ENCODE measurements at regions of chr6 and their contacts with region 1.

Region 1: DNA sequence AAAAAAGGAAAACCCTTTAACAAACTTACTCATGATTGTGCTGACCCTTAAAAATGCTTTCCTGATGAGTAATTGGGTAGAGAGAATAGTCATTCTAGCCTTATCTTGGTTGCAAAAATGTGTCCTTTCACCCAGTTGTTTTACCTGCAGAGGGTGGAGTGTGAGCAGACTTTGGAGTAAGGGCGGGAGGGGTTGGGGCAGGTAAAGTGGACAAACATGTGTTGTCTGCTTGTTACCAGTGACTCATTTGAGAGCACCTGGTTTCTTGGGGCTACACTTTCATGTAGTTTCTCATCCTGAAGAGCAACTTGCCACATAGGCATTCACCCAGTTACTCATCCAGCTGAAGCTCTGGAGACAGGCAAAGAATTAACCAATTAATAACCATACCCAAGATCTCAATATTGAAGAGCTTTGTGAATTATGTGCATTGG is 121.1 kb downstream of the TNFRSF21 start:
- DNase-seq: peak; percentile 95
- ATAC-seq: peak; percentile 89
- H3K4me3 ChIP-seq: no peak overlapping the region
- H3K27ac ChIP-seq: peak overlapping the region; percentile 65
- H3K4me1 ChIP-seq: peaks cover 31% of the 10 kb centered on the region
- H3K27me3 ChIP-seq: no peaks in the 10 kb centered on the region
- CTCF ChIP-seq: no peak
- EP300 ChIP-seq: peak in 1 of 2 experiments; percentile 87; a peak in 2 of 4 replicates
- POLR2A ChIP-seq: no peak
- RAD21 ChIP-seq: no peak

Region 2: DNA sequence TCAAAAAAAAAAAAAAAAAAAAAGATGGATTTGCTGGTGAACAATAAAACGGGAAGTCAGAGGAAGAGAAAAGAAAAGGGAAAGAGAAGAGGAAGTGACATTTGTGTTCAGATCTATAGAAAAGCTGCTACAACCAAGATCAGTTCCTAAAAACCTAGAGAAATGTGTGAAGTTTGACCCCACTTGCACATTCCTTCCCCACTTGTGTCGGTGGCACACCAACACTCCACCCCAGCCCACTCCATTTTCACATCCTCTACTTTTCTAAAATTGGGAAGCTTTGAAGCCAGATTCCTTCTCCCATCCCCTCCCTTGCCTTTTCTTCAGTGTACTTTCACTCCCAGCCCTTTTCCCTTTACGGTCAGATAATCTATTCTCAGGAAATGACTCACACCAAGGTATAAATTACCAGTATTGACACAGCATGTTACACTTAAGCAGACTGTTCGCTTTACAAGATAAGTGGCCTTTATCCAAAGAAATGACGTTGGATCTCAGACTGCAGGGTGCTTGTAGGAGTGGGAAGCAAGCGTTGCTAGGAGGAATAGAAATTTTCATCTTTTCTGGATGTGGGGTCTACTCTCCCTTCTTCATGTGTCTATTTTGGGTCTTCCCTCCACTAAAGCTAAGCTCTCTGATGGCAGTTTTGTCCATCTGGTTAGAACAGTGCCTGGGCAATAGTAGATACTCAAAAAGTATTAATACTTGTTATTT is 54.0 kb before region 1 on chr6:
- CTCF ChIA-PET with region 1: no interaction called
- POLR2A ChIA-PET with region 1: no interaction called
- in situ Hi-C with region 1: no loop called
- intact Hi-C with region 1: loop called (anchors 1 kb)
- DNase-seq: peak; percentile 91
- ATAC-seq: peak; percentile 77
- H3K4me3 ChIP-seq: peak overlapping the region in 2 of 3 experiments; percentile 7; a peak in 2 of 6 replicates
- H3K27ac ChIP-seq: peak overlapping the region; percentile 74
- H3K4me1 ChIP-seq: peaks cover 84% of the 10 kb centered on the region
- H3K27me3 ChIP-seq: no peaks in the 10 kb centered on the region
- CTCF ChIP-seq: no peak
- EP300 ChIP-seq: peak in 1 of 2 experiments; percentile 97; a peak in 2 of 4 replicates
- POLR2A ChIP-seq: no peak
- RAD21 ChIP-seq: no peak

Region 3: GRCh38 chr6:47157653-47158219 is 30.9 kb before region 1 on chr6:
- CTCF ChIA-PET with region 1: no interaction called
- POLR2A ChIA-PET with region 1: interaction called, 3 read pairs
- in situ Hi-C with region 1: no loop called
- intact Hi-C with region 1: loop called (anchors 1 kb)
- DNase-seq: no peak
- ATAC-seq: no peak
- H3K4me3 ChIP-seq: no peak overlapping the region
- H3K27ac ChIP-seq: no peak overlapping the region
- H3K4me1 ChIP-seq: peaks cover 37% of the 10 kb centered on the region
- H3K27me3 ChIP-seq: no peaks in the 10 kb centered on the region
- CTCF ChIP-seq: no peak
- EP300 ChIP-seq: no peak
- POLR2A ChIP-seq: no peak
- RAD21 ChIP-seq: no peak

Measured in HepG2 (cell line).